AG04449 (cell line): ENCODE measurements at regions of chr15 and their contacts with region 1.

Region 1: GRCh38 chr15:34241372-34242330 is 16.8 kb downstream of the EMC4 start:
- DNase-seq: no peak
- H3K4me3 ChIP-seq: no peak overlapping the region
- CTCF ChIP-seq: peak; percentile 36

Region 2: DNA sequence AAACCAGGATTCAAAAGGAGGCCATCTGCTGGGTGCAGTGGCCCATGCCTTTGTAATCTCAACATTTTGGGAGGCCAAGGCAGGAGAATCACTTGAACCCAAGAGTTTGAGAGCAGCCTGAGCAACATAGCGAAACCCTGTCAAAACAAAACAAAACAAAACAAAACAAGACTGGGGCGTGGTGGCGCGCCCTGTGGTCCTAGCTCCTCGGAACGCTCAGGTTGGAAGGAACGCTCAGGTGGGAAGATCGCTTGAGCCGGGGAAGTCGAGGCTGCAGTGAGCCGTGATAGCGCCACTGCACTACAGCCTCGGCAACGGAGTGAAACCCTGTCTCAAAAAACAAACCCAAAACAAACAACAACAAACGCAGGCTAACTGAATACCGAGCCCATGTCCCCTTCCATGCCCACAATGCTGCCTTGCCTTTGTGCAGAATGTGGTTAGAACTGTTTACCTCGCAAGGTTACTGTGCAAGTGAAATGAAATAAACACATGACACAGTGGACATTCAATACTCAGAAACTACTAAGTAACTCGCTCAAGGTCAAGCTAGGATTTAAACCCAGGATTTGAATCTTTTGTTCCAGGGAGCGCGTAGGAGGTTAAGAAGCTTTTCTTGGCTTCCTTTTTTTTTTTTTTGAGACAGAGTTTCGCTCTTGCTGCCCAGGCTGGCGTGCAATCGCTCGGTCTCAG is 17.6 kb before region 1 on chr15:
- CTCF ChIA-PET with region 1: interaction called, 10 read pairs
- POLR2A ChIA-PET with region 1: no interaction called
- DNase-seq: no peak
- H3K4me3 ChIP-seq: peak overlapping the region; percentile 99
- CTCF ChIP-seq: no peak

Region 3: GRCh38 chr15:34304613-34305012 is 63.0 kb after region 1 on chr15:
- CTCF ChIA-PET with region 1: interaction called, 10 read pairs
- POLR2A ChIA-PET with region 1: no interaction called
- DNase-seq: peak; percentile 45
- H3K4me3 ChIP-seq: no peak overlapping the region
- CTCF ChIP-seq: no peak